ENCODE measurements at regions of chr12 and their contacts with region 1.

Region 1: GRCh38 chr12:15796493-15797141 is 7.4 kb upstream of the EPS8 start:
- DNase-seq: peak; percentile 55
- H3K4me3 Mint-ChIP-seq: no peak overlapping the region
- H3K27ac Mint-ChIP-seq: peak overlapping the region; percentile 77
- H3K4me1 Mint-ChIP-seq: peaks cover 57% of the 10 kb centered on the region
- H3K27me3 Mint-ChIP-seq: no peaks in the 10 kb centered on the region
- CTCF ChIP-seq: no peak

Region 2: DNA sequence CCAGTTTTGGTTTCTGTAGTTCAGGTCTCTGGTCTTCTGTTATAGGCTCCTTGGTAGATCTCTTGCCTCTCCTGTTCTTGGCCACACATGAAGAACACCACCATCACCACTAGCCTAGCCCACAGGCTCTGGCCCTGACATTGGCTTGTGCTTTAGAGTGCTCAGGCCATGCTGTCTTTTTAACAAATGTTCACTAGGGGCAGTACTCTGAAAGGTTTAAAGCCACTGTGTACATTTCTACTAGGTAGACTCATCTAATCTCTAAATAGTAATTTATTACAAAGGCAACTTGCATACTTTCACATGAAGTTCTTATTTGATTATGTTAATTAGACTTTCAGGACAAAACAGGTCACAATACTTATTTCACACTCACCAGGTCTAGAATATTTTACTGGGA is 785.5 kb before region 1 on chr12:
- CTCF ChIA-PET with region 1: no interaction called
- intact Hi-C with region 1: no loop called
- DNase-seq: no peak
- H3K4me3 Mint-ChIP-seq: no peak overlapping the region
- H3K27ac Mint-ChIP-seq: no peak overlapping the region
- H3K4me1 Mint-ChIP-seq: no peaks in the 10 kb centered on the region
- H3K27me3 Mint-ChIP-seq: peaks cover 20% of the 10 kb centered on the region
- CTCF ChIP-seq: peak; percentile 22

Region 3: DNA sequence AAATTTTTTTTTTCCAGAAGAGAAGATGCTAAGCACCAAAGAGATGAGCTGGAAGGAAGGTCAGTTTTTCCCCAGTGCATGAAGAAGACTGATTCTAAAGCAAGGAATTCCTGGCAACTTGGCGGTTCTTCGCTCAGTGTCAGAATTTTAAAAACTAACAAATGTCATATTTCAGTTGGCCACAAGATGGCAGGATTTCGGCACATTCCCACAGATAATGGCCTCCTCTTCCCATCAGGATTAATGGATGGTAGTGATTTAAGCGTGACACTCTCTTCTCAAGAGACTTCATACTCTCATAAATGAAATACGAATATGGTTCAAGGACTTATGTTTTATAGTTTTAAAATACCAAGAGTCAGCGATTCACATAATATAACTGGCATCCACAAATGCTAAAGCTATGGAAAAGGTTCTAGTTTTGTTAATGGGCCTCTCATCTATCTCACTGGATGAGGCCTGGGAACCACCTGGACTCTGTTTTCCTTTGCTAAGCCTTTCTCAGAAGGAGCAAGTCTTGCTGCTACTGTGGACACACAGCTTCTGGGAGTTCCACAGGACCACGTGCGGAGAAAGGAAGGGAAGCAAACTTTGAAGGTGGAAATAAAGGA is 520.4 kb before region 1 on chr12:
- CTCF ChIA-PET with region 1: no interaction called
- intact Hi-C with region 1: no loop called
- DNase-seq: peak; percentile 41
- H3K4me3 Mint-ChIP-seq: no peak overlapping the region
- H3K27ac Mint-ChIP-seq: no peak overlapping the region
- H3K4me1 Mint-ChIP-seq: peaks cover 22% of the 10 kb centered on the region
- H3K27me3 Mint-ChIP-seq: no peaks in the 10 kb centered on the region
- CTCF ChIP-seq: peak; percentile 59

Region 4: DNA sequence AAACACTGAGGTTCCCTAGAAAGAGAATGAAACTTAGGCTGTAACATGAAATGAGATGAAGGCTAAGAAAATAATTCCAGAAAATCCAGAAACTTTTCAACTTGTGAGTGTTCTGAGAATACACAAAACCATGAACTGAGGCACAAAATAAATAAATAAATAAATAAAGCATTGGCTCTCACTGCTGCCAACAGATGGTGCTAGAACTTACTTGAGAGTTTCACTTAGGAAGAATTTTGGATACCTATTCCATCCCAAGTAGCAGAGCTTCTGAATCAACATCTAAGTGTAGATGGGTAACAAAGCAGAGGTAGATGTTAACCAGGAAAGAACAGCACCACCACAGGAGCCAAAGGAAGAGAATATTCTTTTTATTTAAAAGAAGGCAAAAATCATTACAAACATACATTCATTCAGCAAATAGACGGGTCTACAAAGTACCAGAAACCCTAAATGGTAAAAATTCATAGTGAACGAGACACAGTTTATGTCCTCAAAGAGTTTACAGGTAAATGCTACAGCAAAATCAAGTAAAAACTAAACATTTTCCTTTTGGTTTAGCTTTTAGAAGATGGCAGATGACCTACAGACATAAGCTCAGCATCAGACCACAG is 24.1 kb before region 1 on chr12:
- CTCF ChIA-PET with region 1: no interaction called
- intact Hi-C with region 1: no loop called
- DNase-seq: no peak
- H3K4me3 Mint-ChIP-seq: no peak overlapping the region
- H3K27ac Mint-ChIP-seq: peak overlapping the region; percentile 86
- H3K4me1 Mint-ChIP-seq: peaks cover 59% of the 10 kb centered on the region
- H3K27me3 Mint-ChIP-seq: no peaks in the 10 kb centered on the region
- CTCF ChIP-seq: peak; percentile 15

Region 5: GRCh38 chr12:15830538-15830937 is 33.9 kb after region 1 on chr12:
- CTCF ChIA-PET with region 1: no interaction called
- intact Hi-C with region 1: loop called (anchors 5 kb)
- DNase-seq: no peak
- H3K4me3 Mint-ChIP-seq: no peak overlapping the region
- H3K27ac Mint-ChIP-seq: no peak overlapping the region
- H3K4me1 Mint-ChIP-seq: peaks cover 57% of the 10 kb centered on the region
- H3K27me3 Mint-ChIP-seq: no peaks in the 10 kb centered on the region
- CTCF ChIP-seq: no peak

Region 6: GRCh38 chr12:15863984-15864383 is 67.4 kb after region 1 on chr12:
- CTCF ChIA-PET with region 1: no interaction called
- intact Hi-C with region 1: no loop called
- DNase-seq: no peak
- H3K4me3 Mint-ChIP-seq: no peak overlapping the region
- H3K27ac Mint-ChIP-seq: no peak overlapping the region
- H3K4me1 Mint-ChIP-seq: no peaks in the 10 kb centered on the region
- H3K27me3 Mint-ChIP-seq: no peaks in the 10 kb centered on the region
- CTCF ChIP-seq: no peak